AG04450 (cell line): ENCODE measurements at regions of chr7 and their contacts with region 1.

Region 1: DNA sequence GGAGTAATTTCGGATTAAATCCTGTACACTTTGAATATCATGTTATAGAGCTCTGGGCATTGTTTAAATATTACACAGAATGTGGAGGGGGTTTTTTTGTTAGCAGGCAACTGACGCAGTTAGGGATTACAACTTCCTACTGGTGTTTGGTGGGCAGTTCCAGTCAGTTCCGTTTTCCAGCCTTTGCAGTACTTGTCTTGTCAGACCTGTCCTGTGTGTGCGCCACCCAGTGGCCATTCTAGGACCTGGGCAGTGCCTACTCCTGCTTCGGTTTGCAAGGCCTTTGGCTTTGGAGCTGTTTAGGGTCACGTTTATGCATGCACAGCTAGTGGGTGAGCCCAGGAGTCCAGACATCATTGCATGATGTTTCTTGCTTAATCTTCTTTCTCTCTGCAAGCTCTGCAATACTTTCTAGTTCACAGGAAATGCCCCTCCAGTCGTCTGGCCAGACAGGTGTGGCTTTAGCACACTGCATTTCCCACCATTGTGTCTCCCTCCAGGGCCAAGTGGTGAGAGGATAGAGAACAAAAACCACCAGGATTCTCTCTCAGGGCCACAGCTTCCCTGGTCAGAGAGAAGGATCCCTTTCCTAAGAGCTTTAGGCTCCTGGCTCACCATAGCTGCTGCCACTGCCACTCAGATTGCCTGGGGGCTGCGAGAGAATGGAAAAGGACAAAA is 96.5 kb upstream of the TARP start:
- DNase-seq: peak; percentile 67
- H3K4me3 ChIP-seq: no peak overlapping the region
- H3K27ac ChIP-seq: no peak overlapping the region
- H3K27me3 ChIP-seq: no peaks in the 10 kb centered on the region
- CTCF ChIP-seq: peak; percentile 87

Region 2: DNA sequence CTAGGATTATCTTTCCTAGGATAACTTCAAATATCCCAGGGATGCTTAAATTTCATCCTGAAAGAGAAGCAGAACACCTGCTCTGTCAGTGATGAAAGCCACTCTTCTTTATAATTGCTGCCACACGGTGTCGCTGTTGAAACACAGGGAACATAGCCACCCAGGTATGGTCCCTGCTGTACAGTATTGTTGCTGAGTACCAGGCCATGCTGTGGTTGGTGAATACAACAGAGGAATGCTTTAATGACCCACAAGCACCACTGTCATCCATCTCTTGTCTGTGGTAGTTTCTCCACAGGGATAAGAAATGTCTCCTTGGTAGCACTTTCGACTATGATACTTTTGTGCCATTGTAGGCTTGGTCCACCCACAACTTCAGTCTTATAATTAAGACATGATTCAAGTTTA is 262.5 kb before region 1 on chr7:
- CTCF ChIA-PET with region 1: interaction called, 14 read pairs
- POLR2A ChIA-PET with region 1: no interaction called
- DNase-seq: peak; percentile 4
- H3K4me3 ChIP-seq: no peak overlapping the region
- H3K27ac ChIP-seq: no peak overlapping the region
- H3K27me3 ChIP-seq: no peaks in the 10 kb centered on the region
- CTCF ChIP-seq: peak; percentile 83

Region 3: DNA sequence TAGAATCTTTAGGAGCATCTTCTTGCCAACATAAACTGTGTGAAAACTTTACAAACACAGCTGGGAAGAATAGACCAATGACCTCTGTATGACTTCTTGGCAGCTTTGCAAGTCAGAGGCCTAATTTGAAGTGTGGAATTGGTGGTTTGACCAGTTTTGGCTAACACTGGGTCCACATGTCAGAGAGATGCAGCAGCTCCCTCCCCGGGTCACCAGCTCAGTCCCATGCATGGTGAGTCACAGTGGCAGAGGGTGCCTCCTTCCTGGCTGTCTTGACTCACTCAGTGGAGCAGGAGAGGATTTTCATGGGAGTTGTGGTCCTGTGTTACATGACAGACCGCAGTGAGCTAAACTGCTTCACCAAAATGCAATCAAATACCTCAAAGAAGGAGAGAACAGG is 200.1 kb before region 1 on chr7:
- CTCF ChIA-PET with region 1: no interaction called
- POLR2A ChIA-PET with region 1: no interaction called
- DNase-seq: no peak
- H3K4me3 ChIP-seq: no peak overlapping the region
- H3K27ac ChIP-seq: peak overlapping the region; percentile 4
- H3K27me3 ChIP-seq: peaks cover 3% of the 10 kb centered on the region
- CTCF ChIP-seq: no peak

Region 4: GRCh38 chr7:38318803-38319416 is 51.0 kb before region 1 on chr7:
- CTCF ChIA-PET with region 1: interaction called, 13 read pairs
- POLR2A ChIA-PET with region 1: no interaction called
- DNase-seq: peak; percentile 51
- H3K4me3 ChIP-seq: no peak overlapping the region
- H3K27ac ChIP-seq: no peak overlapping the region
- H3K27me3 ChIP-seq: no peaks in the 10 kb centered on the region
- CTCF ChIP-seq: peak; percentile 82

Region 5: GRCh38 chr7:38351601-38352000 is 18.4 kb before region 1 on chr7:
- CTCF ChIA-PET with region 1: interaction called, 11 read pairs
- POLR2A ChIA-PET with region 1: no interaction called
- DNase-seq: no peak
- H3K4me3 ChIP-seq: no peak overlapping the region
- H3K27ac ChIP-seq: no peak overlapping the region
- H3K27me3 ChIP-seq: no peaks in the 10 kb centered on the region
- CTCF ChIP-seq: no peak

Region 6: GRCh38 chr7:38382684-38383083 is 12.7 kb after region 1 on chr7:
- CTCF ChIA-PET with region 1: interaction called, 43 read pairs
- POLR2A ChIA-PET with region 1: no interaction called
- DNase-seq: no peak
- H3K4me3 ChIP-seq: no peak overlapping the region
- H3K27ac ChIP-seq: no peak overlapping the region
- H3K27me3 ChIP-seq: no peaks in the 10 kb centered on the region
- CTCF ChIP-seq: no peak

Region 7: DNA sequence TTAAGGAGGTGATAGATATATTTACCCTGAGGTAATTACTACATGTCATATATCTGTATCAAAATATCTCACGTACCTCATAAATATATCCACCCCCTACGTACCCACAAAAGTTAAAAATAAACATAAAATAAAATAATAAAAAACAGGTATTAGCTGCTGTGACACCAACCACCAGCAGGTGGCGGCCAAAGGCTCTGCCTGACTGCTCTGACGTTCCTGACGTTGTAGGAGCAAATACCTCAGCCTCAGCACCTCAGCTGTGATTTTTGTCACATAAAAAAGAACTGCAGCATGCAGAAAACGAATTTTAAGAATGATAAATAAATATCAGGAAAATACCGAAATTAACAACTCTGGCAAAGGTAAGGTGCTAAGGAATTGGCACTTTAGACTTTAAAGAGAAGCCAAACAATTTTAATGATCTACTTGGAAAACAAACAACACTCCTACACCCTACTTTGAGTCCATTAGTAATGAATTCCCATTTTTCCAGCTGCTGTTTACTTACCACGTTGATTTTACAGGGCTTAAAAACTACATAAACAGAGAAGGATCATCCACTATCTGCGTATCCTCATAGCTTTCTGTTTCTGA is 28.9 kb after region 1 on chr7:
- CTCF ChIA-PET with region 1: interaction called, 16 read pairs
- POLR2A ChIA-PET with region 1: no interaction called
- DNase-seq: peak; percentile 15
- H3K4me3 ChIP-seq: no peak overlapping the region
- H3K27ac ChIP-seq: no peak overlapping the region
- H3K27me3 ChIP-seq: no peaks in the 10 kb centered on the region
- CTCF ChIP-seq: peak; percentile 96

Region 8: GRCh38 chr7:38535073-38535472 is 165.1 kb after region 1 on chr7:
- CTCF ChIA-PET with region 1: no interaction called
- POLR2A ChIA-PET with region 1: no interaction called
- DNase-seq: no peak
- H3K4me3 ChIP-seq: no peak overlapping the region
- H3K27ac ChIP-seq: no peak overlapping the region
- H3K27me3 ChIP-seq: no peaks in the 10 kb centered on the region
- CTCF ChIP-seq: no peak

Region 9: DNA sequence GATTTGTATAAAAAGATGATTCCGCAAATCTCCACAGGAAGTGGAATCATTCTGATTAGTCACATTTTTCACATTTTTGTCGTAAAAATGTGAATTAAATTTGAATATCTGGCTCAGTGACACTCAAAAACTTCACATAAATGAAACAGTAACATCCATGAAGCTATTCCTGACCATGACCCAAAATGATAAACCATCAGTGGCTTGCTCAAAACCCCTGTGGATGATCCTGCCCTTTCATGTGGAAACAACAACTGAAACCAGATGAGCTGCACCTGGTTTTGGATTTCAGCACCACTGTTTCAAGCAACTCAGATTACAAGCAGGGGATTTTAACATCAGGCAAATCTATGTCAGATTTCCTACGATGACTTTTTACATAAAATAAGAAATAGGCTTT is 180.9 kb after region 1 on chr7:
- CTCF ChIA-PET with region 1: no interaction called
- POLR2A ChIA-PET with region 1: no interaction called
- DNase-seq: no peak
- H3K4me3 ChIP-seq: no peak overlapping the region
- H3K27ac ChIP-seq: no peak overlapping the region
- H3K27me3 ChIP-seq: no peaks in the 10 kb centered on the region
- CTCF ChIP-seq: no peak

Region 10: DNA sequence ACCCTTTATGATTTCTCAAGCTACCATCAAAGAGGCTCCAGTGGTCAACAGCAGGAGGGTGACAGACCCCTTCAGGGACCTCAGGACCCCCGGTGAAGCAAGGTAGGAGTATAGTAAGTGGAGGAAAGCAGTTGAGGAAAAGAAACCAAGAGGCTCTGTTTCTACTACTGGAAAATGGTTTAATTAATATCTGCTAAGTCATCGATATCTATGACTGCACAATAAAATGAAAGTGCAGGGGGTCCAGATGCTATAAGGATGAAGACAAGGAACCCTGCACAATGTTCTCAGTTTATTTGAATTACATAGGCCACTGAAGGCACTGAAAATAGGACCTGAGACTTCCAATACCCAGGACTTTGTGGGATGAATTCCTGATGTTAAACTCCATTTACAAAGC is 237.5 kb after region 1 on chr7:
- CTCF ChIA-PET with region 1: no interaction called
- POLR2A ChIA-PET with region 1: no interaction called
- DNase-seq: no peak
- H3K4me3 ChIP-seq: no peak overlapping the region
- H3K27ac ChIP-seq: no peak overlapping the region
- H3K27me3 ChIP-seq: no peaks in the 10 kb centered on the region
- CTCF ChIP-seq: no peak

Region 11: GRCh38 chr7:38660427-38661099 is 290.6 kb after region 1 on chr7:
- CTCF ChIA-PET with region 1: interaction called, 13 read pairs
- POLR2A ChIA-PET with region 1: no interaction called
- DNase-seq: no peak
- H3K4me3 ChIP-seq: no peak overlapping the region
- H3K27ac ChIP-seq: no peak overlapping the region
- H3K27me3 ChIP-seq: no peaks in the 10 kb centered on the region
- CTCF ChIP-seq: peak; percentile 88